HCT116 (cell line): ENCODE measurements at regions of chr2 and their contacts with region 1.

Region 1: DNA sequence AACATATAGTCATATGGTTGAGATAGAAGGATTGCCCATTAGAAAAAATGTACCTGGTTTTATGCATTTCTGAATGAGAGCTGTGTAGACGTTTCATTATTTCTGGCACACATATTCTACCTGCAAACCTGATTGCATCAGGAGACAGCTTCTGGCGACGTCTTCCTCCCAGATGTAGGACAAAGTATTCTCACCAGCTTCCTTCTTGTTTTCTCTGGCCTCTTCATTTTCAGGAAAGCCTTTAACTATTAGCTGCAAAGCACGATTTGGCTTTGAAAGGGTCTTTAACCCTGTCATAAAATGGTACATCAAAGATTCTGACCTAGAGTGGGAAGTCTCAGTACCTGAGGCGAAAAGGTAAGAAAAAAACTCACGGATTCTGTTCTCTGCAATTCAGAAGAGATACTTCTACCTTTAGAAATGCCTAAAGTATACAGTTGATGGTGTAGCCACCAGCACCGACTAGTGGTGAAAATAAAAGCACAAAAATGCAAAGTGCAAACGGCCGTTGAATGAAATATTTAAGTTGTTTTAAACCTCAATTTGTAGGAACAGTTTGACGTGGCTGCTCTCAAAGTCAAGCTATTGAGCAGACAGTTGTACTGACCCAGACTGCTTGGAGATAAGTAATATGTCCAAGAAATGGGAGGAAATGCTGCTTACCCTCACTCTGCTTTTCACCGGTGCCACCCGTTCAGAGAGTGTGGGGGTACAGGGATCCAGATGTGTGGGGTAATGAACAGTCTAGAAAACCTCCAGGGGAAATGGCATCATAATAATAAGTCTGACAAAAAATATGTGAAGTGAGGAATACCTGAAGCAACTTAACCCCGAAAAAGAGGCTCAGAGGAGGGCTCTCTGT is 20.2 kb downstream of the IL18RAP start:
- DNase-seq: peak; percentile 18
- ATAC-seq: peak; percentile 73
- H3K4me3 ChIP-seq: no peak overlapping the region
- H3K27ac ChIP-seq: no peak overlapping the region
- H3K4me1 ChIP-seq: no peaks in the 10 kb centered on the region; a peak in 1 of 4 replicates
- H3K27me3 ChIP-seq: no peaks in the 10 kb centered on the region
- CTCF ChIP-seq: peak; percentile 60 to 76 (median 67); a peak in 5 of 6 replicates
- POLR2A ChIP-seq: no peak
- RAD21 ChIP-seq: peak; percentile 73

Region 2: DNA sequence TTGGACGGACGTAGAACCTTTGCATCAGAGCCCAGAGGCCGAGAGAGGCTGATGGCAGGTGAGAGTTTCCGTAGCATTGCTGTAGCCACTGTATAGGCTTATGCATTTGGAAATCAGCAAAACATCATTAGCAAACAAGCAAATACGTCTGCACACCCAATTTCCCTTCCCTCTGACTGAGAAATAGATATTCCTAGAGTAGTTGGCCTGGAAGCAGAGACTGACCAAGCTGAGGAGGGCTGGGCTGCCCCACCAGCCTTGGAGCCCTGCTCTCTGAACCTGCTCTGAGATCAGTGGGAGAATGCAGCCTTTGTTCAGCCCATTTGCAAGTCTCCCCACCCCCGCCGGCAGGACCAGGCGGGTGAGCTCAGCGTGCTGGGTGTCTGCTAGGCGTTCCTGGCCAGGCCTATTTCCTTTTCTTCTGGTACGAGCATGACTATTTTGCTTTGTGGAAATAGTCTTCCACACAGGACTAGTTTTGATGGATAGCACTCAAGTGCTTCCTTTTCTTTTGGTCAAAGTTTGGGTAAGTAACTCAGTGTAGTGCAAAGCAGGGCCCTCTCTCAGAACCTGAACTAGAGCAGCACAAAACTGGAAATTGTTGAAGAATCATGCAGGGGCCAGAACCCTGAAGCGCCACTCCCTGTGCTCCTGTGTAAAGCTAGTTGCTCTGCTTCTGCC is 1112.8 kb before region 1 on chr2:
- CTCF ChIA-PET with region 1: no interaction called
- POLR2A ChIA-PET with region 1: no interaction called
- RAD21 ChIA-PET with region 1: no interaction called
- intact Hi-C with region 1: loop called (anchors 10 kb)
- DNase-seq: no peak
- ATAC-seq: no peak
- H3K4me3 ChIP-seq: no peak overlapping the region
- H3K27ac ChIP-seq: no peak overlapping the region
- H3K4me1 ChIP-seq: peaks cover 11 to 18% of the 10 kb centered on the region in 2 experiments; a peak in 3 of 4 replicates
- H3K27me3 ChIP-seq: no peaks in the 10 kb centered on the region
- CTCF ChIP-seq: no peak
- POLR2A ChIP-seq: no peak
- RAD21 ChIP-seq: no peak

Region 3: DNA sequence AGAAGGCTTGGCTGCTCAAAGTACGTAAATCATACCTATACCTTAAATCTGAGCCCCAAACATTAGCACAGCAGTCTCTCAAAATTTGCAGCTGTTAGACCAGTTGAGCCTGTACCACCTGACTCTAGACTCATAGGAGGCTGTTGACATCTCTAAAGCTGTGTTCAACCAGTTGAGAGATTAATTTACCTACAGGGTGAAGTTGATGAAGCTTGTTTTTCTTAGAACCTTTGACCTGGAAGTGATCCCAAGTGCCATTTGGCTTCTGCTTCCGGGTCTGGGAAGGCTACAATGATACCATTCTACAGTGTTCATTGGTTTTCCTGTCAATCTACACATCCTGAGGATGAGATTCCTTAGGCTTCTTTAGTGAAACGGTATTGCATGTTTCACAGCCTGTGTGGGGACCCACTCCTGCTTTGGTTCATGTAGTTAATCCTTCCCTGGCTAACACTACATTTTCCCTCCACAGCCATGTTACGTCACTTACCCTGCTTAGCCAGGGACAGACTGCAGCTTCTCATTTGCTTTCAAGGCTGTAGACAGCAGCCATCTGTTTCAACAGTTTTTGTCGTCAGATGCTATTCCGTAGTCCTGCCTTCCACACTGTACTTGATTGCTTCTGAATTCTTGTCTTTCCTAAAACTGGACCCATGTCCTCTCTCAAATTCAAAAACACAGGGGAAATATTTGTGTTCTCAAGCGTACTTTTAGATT is 261.1 kb before region 1 on chr2:
- CTCF ChIA-PET with region 1: no interaction called
- POLR2A ChIA-PET with region 1: no interaction called
- RAD21 ChIA-PET with region 1: no interaction called
- intact Hi-C with region 1: no loop called
- DNase-seq: no peak
- ATAC-seq: no peak
- H3K4me3 ChIP-seq: no peak overlapping the region
- H3K27ac ChIP-seq: no peak overlapping the region
- H3K4me1 ChIP-seq: no peaks in the 10 kb centered on the region
- H3K27me3 ChIP-seq: no peaks in the 10 kb centered on the region
- CTCF ChIP-seq: no peak
- POLR2A ChIP-seq: no peak
- RAD21 ChIP-seq: no peak

Region 4: GRCh38 chr2:102258386-102259074 is 184.7 kb before region 1 on chr2:
- CTCF ChIA-PET with region 1: no interaction called
- POLR2A ChIA-PET with region 1: no interaction called
- RAD21 ChIA-PET with region 1: no interaction called
- intact Hi-C with region 1: loop called (anchors 5 kb)
- DNase-seq: peak; percentile 29
- ATAC-seq: no peak
- H3K4me3 ChIP-seq: no peak overlapping the region
- H3K27ac ChIP-seq: no peak overlapping the region
- H3K4me1 ChIP-seq: peaks cover 0 to 12% of the 10 kb centered on the region in 2 experiments; a peak in 1 of 4 replicates
- H3K27me3 ChIP-seq: no peaks in the 10 kb centered on the region
- CTCF ChIP-seq: no peak
- POLR2A ChIP-seq: no peak
- RAD21 ChIP-seq: no peak